HCT116 (cell line): ENCODE measurements at regions of chr2 and their contacts with region 1.

Region 1: DNA sequence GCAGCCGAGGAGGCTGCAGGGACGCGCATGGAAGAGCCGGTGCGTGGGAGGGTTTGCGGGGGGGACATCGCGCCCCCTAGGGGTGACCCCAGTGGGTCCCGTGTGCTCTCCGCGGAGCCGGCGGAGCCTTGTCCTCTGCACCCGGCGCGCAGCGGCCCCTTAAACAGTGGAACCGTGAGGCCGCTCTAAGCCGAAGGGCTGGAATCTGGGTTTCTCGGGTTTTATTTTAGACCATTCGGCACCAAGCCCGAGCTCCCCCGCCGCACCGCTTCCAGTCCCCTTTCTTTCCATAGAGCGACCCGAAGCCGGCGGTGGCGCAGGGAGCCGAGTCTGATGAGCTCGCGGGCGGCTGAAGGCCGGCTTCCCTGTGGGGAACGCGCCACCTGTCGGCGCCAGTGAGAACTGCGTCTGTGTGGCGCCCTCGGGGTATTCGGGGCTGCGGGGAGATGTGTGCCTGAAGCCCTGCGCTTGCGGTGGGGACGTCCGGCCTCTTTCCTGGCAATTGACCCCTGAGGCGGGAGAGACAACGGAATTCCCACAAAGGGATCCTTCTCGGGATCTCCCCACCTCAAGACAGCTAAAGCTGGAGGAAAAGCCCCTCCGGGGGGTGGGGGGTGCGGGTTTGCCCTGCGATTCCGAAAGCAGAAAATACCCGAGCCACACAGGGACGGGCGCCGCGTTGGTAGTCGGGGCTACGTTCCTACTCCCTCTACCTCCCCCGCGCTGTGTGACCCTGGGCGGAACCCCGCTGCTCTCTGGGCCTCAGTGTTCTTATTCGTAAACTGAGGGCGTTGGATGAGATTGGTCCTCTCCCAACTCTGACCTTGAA is 8.2 kb upstream of the EN1 start:
- DNase-seq: peak; percentile 53
- ATAC-seq: peak; percentile 96
- H3K4me3 ChIP-seq: peak overlapping the region; percentile 40 to 47
- H3K27ac ChIP-seq: no peak overlapping the region
- H3K4me1 ChIP-seq: peaks cover 0 to 4% of the 10 kb centered on the region in 2 experiments; a peak in 1 of 4 replicates
- H3K27me3 ChIP-seq: no peaks in the 10 kb centered on the region
- CTCF ChIP-seq: peak; percentile 75 to 96 (median 75)
- POLR2A ChIP-seq: no peak
- RAD21 ChIP-seq: peak; percentile 91

Region 2: GRCh38 chr2:118032169-118033013 is 823.3 kb before region 1 on chr2:
- CTCF ChIA-PET with region 1: interaction called, 17 read pairs
- POLR2A ChIA-PET with region 1: no interaction called
- RAD21 ChIA-PET with region 1: no interaction called
- intact Hi-C with region 1: no loop called
- DNase-seq: no peak
- ATAC-seq: peak; percentile 94
- H3K4me3 ChIP-seq: no peak overlapping the region
- H3K27ac ChIP-seq: no peak overlapping the region
- H3K4me1 ChIP-seq: no peaks in the 10 kb centered on the region
- H3K27me3 ChIP-seq: no peaks in the 10 kb centered on the region
- CTCF ChIP-seq: peak; percentile 49 to 78 (median 65); a peak in 5 of 6 replicates
- POLR2A ChIP-seq: no peak
- RAD21 ChIP-seq: peak; percentile 57

Region 3: DNA sequence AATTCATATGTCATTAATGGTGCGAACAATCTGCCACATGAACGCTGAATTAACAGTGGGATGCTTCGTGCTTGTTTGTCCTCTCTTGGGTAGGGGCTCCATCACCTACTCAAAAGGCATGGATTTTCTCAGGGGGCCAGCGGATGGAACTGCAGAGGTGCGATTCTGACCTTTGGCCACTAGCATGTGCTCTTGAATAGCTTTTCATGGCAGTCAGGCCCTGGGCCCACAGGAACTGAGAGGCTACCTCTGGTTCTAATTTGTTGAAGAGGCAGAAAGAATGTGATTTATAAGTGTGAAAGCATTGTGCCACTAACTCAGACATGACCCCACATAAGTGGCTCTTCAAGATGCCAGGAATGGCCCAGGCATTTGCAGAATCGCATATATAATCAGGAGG is 484.1 kb before region 1 on chr2:
- CTCF ChIA-PET with region 1: interaction called, 20 read pairs
- POLR2A ChIA-PET with region 1: no interaction called
- RAD21 ChIA-PET with region 1: no interaction called
- intact Hi-C with region 1: loop called (anchors 1 kb)
- DNase-seq: peak; percentile 19
- ATAC-seq: peak; percentile 89
- H3K4me3 ChIP-seq: no peak overlapping the region
- H3K27ac ChIP-seq: no peak overlapping the region
- H3K4me1 ChIP-seq: no peaks in the 10 kb centered on the region
- H3K27me3 ChIP-seq: no peaks in the 10 kb centered on the region
- CTCF ChIP-seq: peak; percentile 63 to 78 (median 69); a peak in 5 of 6 replicates
- POLR2A ChIP-seq: no peak
- RAD21 ChIP-seq: peak; percentile 80

Region 4: GRCh38 chr2:118492335-118492734 is 363.3 kb before region 1 on chr2:
- CTCF ChIA-PET with region 1: interaction called, 6 read pairs
- POLR2A ChIA-PET with region 1: no interaction called
- RAD21 ChIA-PET with region 1: no interaction called
- intact Hi-C with region 1: loop called (anchors 1 kb)
- DNase-seq: peak; percentile 24
- ATAC-seq: peak; percentile 55
- H3K4me3 ChIP-seq: no peak overlapping the region
- H3K27ac ChIP-seq: no peak overlapping the region
- H3K4me1 ChIP-seq: no peaks in the 10 kb centered on the region
- H3K27me3 ChIP-seq: no peaks in the 10 kb centered on the region
- CTCF ChIP-seq: peak; percentile 36 to 62 (median 38); a peak in 5 of 6 replicates
- POLR2A ChIP-seq: no peak
- RAD21 ChIP-seq: peak; percentile 44

Region 5: GRCh38 chr2:118632921-118633320 is 222.7 kb before region 1 on chr2:
- CTCF ChIA-PET with region 1: no interaction called
- POLR2A ChIA-PET with region 1: no interaction called
- RAD21 ChIA-PET with region 1: no interaction called
- intact Hi-C with region 1: no loop called
- DNase-seq: no peak
- ATAC-seq: no peak
- H3K4me3 ChIP-seq: no peak overlapping the region
- H3K27ac ChIP-seq: no peak overlapping the region
- H3K4me1 ChIP-seq: no peaks in the 10 kb centered on the region
- H3K27me3 ChIP-seq: peaks cover 18% of the 10 kb centered on the region; the same call in 1 of the 2 replicates
- CTCF ChIP-seq: no peak
- POLR2A ChIP-seq: no peak
- RAD21 ChIP-seq: no peak

Region 6: DNA sequence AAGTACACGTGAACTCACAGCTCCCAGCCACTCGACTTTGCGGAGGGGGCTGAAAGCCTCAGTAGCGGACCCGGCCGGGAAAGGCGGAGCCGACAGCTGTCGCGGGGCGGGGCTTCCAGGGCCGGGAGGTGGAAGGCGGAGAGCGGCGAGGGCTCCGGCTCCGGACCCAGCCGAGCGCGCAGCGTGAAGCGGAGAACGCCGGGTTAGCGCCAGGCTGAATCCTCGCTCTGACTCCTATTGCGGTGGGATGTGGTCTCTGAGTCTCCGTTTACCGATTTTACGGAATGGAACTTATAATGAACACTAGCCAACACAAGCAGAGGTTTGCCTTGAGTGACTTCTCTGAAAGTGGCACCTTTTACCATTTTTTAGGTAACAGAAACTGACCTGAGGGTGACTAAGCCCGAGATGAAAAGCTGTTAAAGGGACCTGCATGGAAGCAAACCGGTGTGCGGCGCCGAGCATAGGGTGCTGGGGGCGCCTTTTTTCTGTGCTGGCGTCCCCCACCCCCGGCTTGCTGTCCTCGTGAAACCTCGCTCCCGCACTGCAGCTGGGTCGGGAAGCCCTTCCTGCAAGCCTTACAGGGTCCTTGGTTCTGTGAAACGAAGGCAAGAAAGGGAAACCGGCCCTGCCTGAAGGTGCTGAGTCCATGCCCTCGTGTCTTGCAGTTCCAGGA is 81.1 kb before region 1 on chr2:
- CTCF ChIA-PET with region 1: no interaction called
- POLR2A ChIA-PET with region 1: no interaction called
- RAD21 ChIA-PET with region 1: no interaction called
- intact Hi-C with region 1: loop called (anchors 5 kb)
- DNase-seq: no peak
- ATAC-seq: peak; percentile 99
- H3K4me3 ChIP-seq: peak overlapping the region; percentile 49 to 60
- H3K27ac ChIP-seq: no peak overlapping the region
- H3K4me1 ChIP-seq: peaks cover 0 to 11% of the 10 kb centered on the region in 2 experiments; a peak in 1 of 4 replicates
- H3K27me3 ChIP-seq: peaks cover 6% of the 10 kb centered on the region; the same call in 1 of the 2 replicates
- CTCF ChIP-seq: no peak
- POLR2A ChIP-seq: no peak
- RAD21 ChIP-seq: no peak